Body of pancreas (tissue), 4 donors: ENCODE measurements at regions of chr9 and their contacts with region 1.

Region 1: DNA sequence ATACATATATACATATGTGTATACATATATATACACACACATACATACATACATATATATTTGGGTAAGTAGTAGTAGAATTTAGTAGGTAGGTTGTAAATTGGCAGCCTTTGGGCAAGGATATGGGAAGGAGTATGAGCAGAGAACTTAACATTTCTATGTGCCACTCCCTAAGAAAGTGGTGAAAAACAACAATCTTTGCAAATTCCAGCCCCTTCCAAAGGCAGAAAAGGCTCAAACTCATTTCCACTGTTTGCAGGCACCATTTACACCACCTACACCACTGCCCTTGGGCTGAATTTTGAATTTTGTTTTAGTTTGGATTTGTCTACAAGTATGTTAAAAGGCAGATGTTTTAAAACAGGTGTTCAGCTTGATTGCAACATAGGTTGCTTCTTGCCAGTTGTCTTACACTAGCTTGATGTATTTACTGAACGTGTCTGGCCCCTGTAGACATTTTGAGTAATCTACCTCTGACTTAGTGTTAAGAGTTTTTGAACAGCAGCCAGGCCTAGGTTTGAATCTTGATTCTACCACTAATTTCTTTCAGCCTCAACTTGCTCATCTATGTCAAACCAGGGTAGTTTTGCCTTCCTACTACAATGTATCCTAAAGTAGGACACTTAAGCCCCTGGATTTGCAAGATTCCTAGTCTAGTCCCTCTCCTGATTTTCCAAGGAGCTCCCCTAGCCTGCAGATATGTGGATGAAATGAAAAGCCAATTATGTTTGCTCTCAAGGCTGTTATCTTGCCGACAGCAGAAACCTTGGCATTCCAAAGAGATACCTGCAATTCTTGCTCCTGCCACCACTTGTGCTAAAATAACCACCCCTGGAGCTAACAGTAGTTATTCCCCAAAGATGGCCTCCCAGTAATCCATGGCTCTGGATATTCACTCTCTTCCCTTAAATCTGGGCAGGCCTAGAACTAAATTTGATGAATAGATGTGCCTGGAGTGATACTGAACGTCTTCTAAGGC is 156.3 kb upstream of the SLC44A1 start:
- DNase-seq: peak in 3 of 4 donors; percentile 10 to 37 (median 13)
- ATAC-seq: no peak
- H3K4me3 ChIP-seq: no peak overlapping the region
- H3K27ac ChIP-seq: no peak overlapping the region
- H3K4me1 ChIP-seq: peaks cover 5% of the 10 kb centered on the region
- H3K27me3 ChIP-seq: no peaks in the 10 kb centered on the region
- CTCF ChIP-seq: peak in 1 of 7 experiments; percentile 7
- POLR2A ChIP-seq: no peak

Region 2: GRCh38 chr9:105141146-105141975 is 53.2 kb after region 1 on chr9:
- intact Hi-C with region 1: loop called (anchors 10 kb)
- DNase-seq: peak in 1 of 4 donors; percentile 22
- ATAC-seq: no peak
- H3K4me3 ChIP-seq: no peak overlapping the region
- H3K27ac ChIP-seq: no peak overlapping the region
- H3K4me1 ChIP-seq: peaks cover 5% of the 10 kb centered on the region
- H3K27me3 ChIP-seq: no peaks in the 10 kb centered on the region
- CTCF ChIP-seq: no peak
- POLR2A ChIP-seq: no peak